T-cell (primary cell): ENCODE measurements at regions of chr11 and their contacts with region 1.

Region 1: GRCh38 chr11:62994775-62995174 is 10.0 kb upstream of the SLC22A6 start:
- DNase-seq: no peak
- ATAC-seq: no peak
- H3K4me3 ChIP-seq: no peak overlapping the region
- H3K4me3 Mint-ChIP-seq: no peak overlapping the region
- H3K27ac ChIP-seq: no peak overlapping the region
- H3K27ac Mint-ChIP-seq: no peak overlapping the region
- H3K4me1 ChIP-seq: peaks cover 0 to 4% of the 10 kb centered on the region in 2 experiments
- H3K4me1 Mint-ChIP-seq: no peaks in the 10 kb centered on the region
- H3K27me3 ChIP-seq: peaks cover 2 to 38% of the 10 kb centered on the region in 2 experiments
- H3K27me3 Mint-ChIP-seq: peaks cover 38 to 42% of the 10 kb centered on the region in 2 donors

Region 2: DNA sequence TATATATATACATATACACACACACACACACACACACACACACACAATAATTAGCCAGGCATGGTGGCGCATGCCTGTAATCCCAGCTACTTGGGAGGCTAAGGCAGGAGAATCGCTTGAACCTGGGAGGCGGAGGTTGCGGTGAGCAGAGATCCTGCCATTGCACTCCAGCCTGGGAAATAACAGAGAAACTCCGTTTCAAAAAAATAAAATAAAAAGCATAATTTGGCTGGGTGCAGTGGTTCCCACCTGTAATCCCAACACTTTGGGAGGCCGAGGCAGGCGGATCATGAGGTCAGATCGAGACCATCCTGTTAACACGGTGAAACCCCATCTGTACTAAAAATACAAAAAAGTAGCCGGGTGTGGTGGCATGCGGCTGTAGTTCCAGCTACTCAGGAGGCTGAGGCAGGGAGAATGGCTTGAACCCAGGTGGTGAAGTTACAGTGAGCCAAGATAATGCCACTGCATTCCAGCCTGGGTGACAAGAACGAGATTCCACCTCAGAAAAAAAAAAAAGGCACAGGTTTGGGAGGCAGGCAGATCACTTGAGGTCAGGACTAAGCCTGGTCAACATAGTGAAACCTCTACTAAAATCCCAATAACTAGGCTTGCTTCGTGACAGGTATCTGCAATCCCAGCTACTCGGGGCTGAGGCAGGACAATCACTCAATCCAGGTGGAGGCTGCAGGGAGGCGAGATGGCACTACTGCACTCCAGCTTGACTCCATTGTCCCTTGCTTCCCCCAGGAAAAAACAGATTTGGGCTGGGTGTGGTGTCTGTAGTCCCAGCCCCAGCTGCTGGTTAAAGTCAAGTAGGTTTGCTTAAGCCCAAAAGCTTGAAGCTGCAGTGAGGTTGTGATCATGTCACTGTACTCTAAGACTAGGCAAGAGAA is 143.6 kb before region 1 on chr11:
- CTCF ChIA-PET with region 1: no interaction called
- POLR2A ChIA-PET with region 1: no interaction called
- DNase-seq: peak in 1 of 35 experiments; percentile 26
- ATAC-seq: no peak
- H3K4me3 ChIP-seq: no peak overlapping the region
- H3K4me3 Mint-ChIP-seq: peak overlapping the region in 2 of 3 donors; percentile 10 to 22
- H3K27ac ChIP-seq: peak overlapping the region; percentile 13
- H3K27ac Mint-ChIP-seq: peak overlapping the region; percentile 72 to 76
- H3K4me1 ChIP-seq: peaks cover 27 to 28% of the 10 kb centered on the region in 2 experiments
- H3K4me1 Mint-ChIP-seq: peaks cover 39 to 52% (median 43%) of the 10 kb centered on the region in 3 donors
- H3K27me3 ChIP-seq: no peaks in the 10 kb centered on the region
- H3K27me3 Mint-ChIP-seq: no peaks in the 10 kb centered on the region

Region 3: GRCh38 chr11:62961017-62961570 is 33.7 kb before region 1 on chr11:
- CTCF ChIA-PET with region 1: no interaction called
- POLR2A ChIA-PET with region 1: interaction called in 1 of 2 experiments, 21 read pairs
- DNase-seq: no peak
- ATAC-seq: no peak
- H3K4me3 ChIP-seq: no peak overlapping the region
- H3K4me3 Mint-ChIP-seq: no peak overlapping the region
- H3K27ac ChIP-seq: no peak overlapping the region
- H3K27ac Mint-ChIP-seq: no peak overlapping the region
- H3K4me1 ChIP-seq: no peaks in the 10 kb centered on the region
- H3K4me1 Mint-ChIP-seq: peaks cover 2 to 8% (median 5%) of the 10 kb centered on the region in 3 donors
- H3K27me3 ChIP-seq: peaks cover 0 to 6% of the 10 kb centered on the region in 2 experiments
- H3K27me3 Mint-ChIP-seq: peaks cover 21 to 23% of the 10 kb centered on the region in 2 donors